ENCODE measurements at regions of chr12 and their contacts with region 1.

Region 1: GRCh38 chr12:69359531-69360347 is at the start of gene YEATS4:
- DNase-seq: peak; percentile 73 to 83 (median 77)
- H3K4me3 ChIP-seq: peak within 1 kb of the TSS; percentile 79 to 88 (median 87)
- H3K4me3 Mint-ChIP-seq: peak within 1 kb of the TSS; percentile 81 to 86
- H3K27ac ChIP-seq: peak within 1 kb of the TSS; percentile 86 to 88
- H3K27ac Mint-ChIP-seq: peak within 1 kb of the TSS; percentile 74 to 91 (median 85)
- H3K4me1 ChIP-seq: peaks cover 20 to 27% of the 10 kb centered on the region in 2 donors
- H3K4me1 Mint-ChIP-seq: peaks cover 40% of the 10 kb centered on the region
- H3K27me3 ChIP-seq: no peaks in the 10 kb centered on the region
- H3K27me3 Mint-ChIP-seq: no peaks in the 10 kb centered on the region
- CTCF ChIP-seq: no peak
- polyA plus RNA-seq, gene YEATS4: 6.6 to 20.9 (median 16.0) TPM

Region 2: GRCh38 chr12:69290545-69291277 is 69.0 kb before region 1 on chr12:
- intact Hi-C with region 1: loop called in 1 of 2 experiments (anchors 5 kb)
- DNase-seq: peak; percentile 83 to 92 (median 85)
- H3K4me3 ChIP-seq: peak overlapping the region in 2 of 3 experiments; percentile 60 to 69
- H3K4me3 Mint-ChIP-seq: peak overlapping the region; percentile 17 to 77
- H3K27ac ChIP-seq: peak overlapping the region in 1 of 2 donors; percentile 66
- H3K27ac Mint-ChIP-seq: peak overlapping the region in 4 of 7 donors; percentile 43 to 69 (median 58)
- H3K4me1 ChIP-seq: peaks cover 29 to 51% of the 10 kb centered on the region in 2 donors
- H3K4me1 Mint-ChIP-seq: peaks cover 48% of the 10 kb centered on the region
- H3K27me3 ChIP-seq: peaks cover 7 to 26% of the 10 kb centered on the region in 2 donors
- H3K27me3 Mint-ChIP-seq: peaks cover 8 to 15% (median 13%) of the 10 kb centered on the region in 3 donors
- CTCF ChIP-seq: peak; percentile 98

Region 3: DNA sequence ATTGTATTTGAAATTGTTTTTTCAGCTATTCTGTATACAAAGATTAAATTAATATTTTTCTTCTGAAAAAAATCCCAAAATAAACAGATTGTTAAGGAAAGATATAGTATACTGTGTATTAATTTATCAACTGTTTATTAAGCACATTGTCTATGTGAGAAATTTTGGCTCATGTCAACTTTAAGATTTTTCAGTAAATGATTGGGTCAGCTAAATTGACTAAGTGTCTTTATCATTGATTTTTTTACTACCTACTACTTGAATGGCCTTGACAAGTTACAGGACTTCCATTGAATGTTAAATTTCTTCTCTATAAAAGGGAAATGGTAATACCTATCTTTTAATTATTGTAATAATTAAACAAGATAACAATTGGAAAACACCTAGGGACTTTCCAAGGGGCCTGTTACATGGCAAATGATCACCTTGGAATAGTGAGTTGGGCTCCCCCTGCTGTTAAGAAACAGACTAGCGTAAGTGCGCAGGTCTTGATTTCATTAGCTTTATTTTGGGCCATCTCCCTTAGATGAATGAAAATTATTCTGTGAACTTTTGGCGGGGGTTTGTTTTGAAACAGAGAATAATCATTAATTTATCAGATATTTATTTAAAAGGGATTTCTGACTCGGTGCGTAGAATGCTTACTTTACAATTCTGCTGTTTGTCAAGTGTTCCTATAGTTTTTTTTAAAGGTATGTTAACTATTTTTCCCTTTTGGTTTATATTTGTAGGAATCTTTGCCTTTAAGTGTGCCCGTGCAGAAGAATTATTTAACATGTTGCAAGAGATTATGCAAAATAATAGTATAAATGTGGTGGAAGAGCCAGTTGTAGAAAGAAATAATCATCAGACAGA is 211.0 kb after region 1 on chr12:
- intact Hi-C with region 1: loop called in 1 of 2 experiments (anchors 10 kb)
- DNase-seq: peak; percentile 29 to 57 (median 55)
- H3K4me3 ChIP-seq: no peak overlapping the region
- H3K4me3 Mint-ChIP-seq: no peak overlapping the region
- H3K27ac ChIP-seq: no peak overlapping the region
- H3K27ac Mint-ChIP-seq: no peak overlapping the region
- H3K4me1 ChIP-seq: no peaks in the 10 kb centered on the region
- H3K4me1 Mint-ChIP-seq: no peaks in the 10 kb centered on the region
- H3K27me3 ChIP-seq: no peaks in the 10 kb centered on the region
- H3K27me3 Mint-ChIP-seq: peaks cover 0 to 2% (median 0%) of the 10 kb centered on the region in 3 donors
- CTCF ChIP-seq: peak; percentile 90

Region 4: DNA sequence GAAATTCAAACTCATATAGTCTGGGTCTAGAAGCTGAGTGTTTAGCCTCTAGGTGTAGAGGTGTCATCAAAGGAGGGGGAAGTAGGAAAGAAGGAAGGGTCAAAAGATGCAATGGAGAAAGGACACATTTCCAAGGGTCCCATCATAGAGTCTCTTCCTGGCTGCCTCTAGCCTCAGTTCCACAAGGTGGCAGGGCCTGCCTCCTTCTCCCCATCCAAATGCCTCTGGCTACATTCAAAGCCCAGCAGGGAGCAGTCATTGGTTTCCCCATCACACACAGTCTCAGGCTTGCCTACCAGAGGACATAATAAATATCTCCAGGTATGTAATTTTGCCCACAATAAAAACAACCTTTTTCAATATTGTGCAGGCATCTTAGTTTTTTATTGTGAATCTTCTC is 223.5 kb after region 1 on chr12:
- intact Hi-C with region 1: loop called (anchors 5 to 10 kb)
- DNase-seq: no peak
- H3K4me3 ChIP-seq: no peak overlapping the region
- H3K4me3 Mint-ChIP-seq: no peak overlapping the region
- H3K27ac ChIP-seq: no peak overlapping the region
- H3K27ac Mint-ChIP-seq: peak overlapping the region in 1 of 7 donors; percentile 20
- H3K4me1 ChIP-seq: peaks cover 9 to 13% of the 10 kb centered on the region in 2 donors
- H3K4me1 Mint-ChIP-seq: peaks cover 12% of the 10 kb centered on the region
- H3K27me3 ChIP-seq: no peaks in the 10 kb centered on the region
- H3K27me3 Mint-ChIP-seq: no peaks in the 10 kb centered on the region
- CTCF ChIP-seq: no peak

Measured in CD14-positive monocyte (primary cell).